IMR-90 (cell line): ENCODE measurements at regions of chr16 and their contacts with region 1.

Region 1: GRCh38 chr16:27639561-27640276 is 89.8 kb downstream of the KATNIP start:
- DNase-seq: peak; percentile 65
- ATAC-seq: peak; percentile 84
- H3K4me3 ChIP-seq: no peak overlapping the region
- H3K27ac ChIP-seq: no peak overlapping the region
- H3K4me1 ChIP-seq: peaks cover 4% of the 10 kb centered on the region; the same call in 1 of the 2 replicates
- H3K27me3 ChIP-seq: no peaks in the 10 kb centered on the region
- CTCF ChIP-seq: peak; percentile 76
- POLR2A ChIP-seq: no peak
- RAD21 ChIP-seq: peak; percentile 87

Region 2: GRCh38 chr16:27335349-27336053 is 304.2 kb before region 1 on chr16:
- CTCF ChIA-PET with region 1: no interaction called
- POLR2A ChIA-PET with region 1: no interaction called
- dilution Hi-C with region 1: no loop called
- in situ Hi-C with region 1: no loop called
- intact Hi-C with region 1: no loop called
- DNase-seq: peak; percentile 54
- ATAC-seq: peak; percentile 61
- H3K4me3 ChIP-seq: no peak overlapping the region
- H3K27ac ChIP-seq: peak overlapping the region; percentile 51
- H3K4me1 ChIP-seq: peaks cover 25% of the 10 kb centered on the region
- H3K27me3 ChIP-seq: no peaks in the 10 kb centered on the region
- CTCF ChIP-seq: no peak
- POLR2A ChIP-seq: no peak
- RAD21 ChIP-seq: no peak

Region 3: GRCh38 chr16:27676839-27677238 is 37.1 kb after region 1 on chr16:
- CTCF ChIA-PET with region 1: no interaction called
- POLR2A ChIA-PET with region 1: no interaction called
- dilution Hi-C with region 1: no loop called
- in situ Hi-C with region 1: no loop called
- intact Hi-C with region 1: loop called (anchors 2 kb)
- DNase-seq: peak; percentile 80
- ATAC-seq: peak; percentile 90
- H3K4me3 ChIP-seq: no peak overlapping the region
- H3K27ac ChIP-seq: no peak overlapping the region
- H3K4me1 ChIP-seq: peaks cover 13% of the 10 kb centered on the region
- H3K27me3 ChIP-seq: no peaks in the 10 kb centered on the region
- CTCF ChIP-seq: no peak
- POLR2A ChIP-seq: no peak
- RAD21 ChIP-seq: no peak

Region 4: DNA sequence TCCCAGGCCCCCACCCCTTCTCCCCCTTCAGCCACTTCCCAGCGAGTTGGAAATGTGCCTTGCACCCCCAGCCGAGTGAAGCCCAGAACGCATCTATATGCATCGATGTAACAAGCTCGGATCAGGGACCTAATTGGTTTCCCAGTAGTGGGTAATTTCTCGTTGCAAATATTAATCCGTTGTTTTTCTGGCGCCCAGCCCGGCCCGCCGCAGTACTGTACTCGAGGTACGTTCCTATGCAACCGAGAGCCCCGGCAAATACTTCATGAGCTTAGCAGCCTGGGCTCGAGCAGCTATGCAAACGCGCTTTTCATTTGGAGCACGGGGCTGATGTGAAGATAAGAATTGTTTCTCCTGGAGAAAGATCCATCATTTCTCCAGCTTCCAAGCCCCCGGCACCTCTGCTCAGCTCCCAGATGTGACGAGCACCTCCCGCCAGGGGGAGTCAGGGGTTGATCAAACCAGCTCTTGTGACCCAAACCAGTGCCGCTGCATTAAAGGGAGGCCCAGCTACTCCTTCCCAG is 140.0 kb after region 1 on chr16:
- CTCF ChIA-PET with region 1: interaction called, 4 read pairs
- POLR2A ChIA-PET with region 1: no interaction called
- dilution Hi-C with region 1: no loop called
- in situ Hi-C with region 1: no loop called
- intact Hi-C with region 1: loop called (anchors 10 kb)
- DNase-seq: peak; percentile 46
- ATAC-seq: peak; percentile 88
- H3K4me3 ChIP-seq: no peak overlapping the region
- H3K27ac ChIP-seq: no peak overlapping the region
- H3K4me1 ChIP-seq: no peaks in the 10 kb centered on the region
- H3K27me3 ChIP-seq: no peaks in the 10 kb centered on the region
- CTCF ChIP-seq: peak; percentile 53
- POLR2A ChIP-seq: no peak
- RAD21 ChIP-seq: peak; percentile 53

Region 5: GRCh38 chr16:27972500-27972899 is 332.8 kb after region 1 on chr16:
- CTCF ChIA-PET with region 1: no interaction called
- POLR2A ChIA-PET with region 1: no interaction called
- dilution Hi-C with region 1: no loop called
- in situ Hi-C with region 1: no loop called
- intact Hi-C with region 1: loop called (anchors 1 kb)
- DNase-seq: peak; percentile 30
- ATAC-seq: no peak
- H3K4me3 ChIP-seq: no peak overlapping the region
- H3K27ac ChIP-seq: no peak overlapping the region
- H3K4me1 ChIP-seq: no peaks in the 10 kb centered on the region
- H3K27me3 ChIP-seq: peaks cover 8% of the 10 kb centered on the region
- CTCF ChIP-seq: peak; percentile 46
- POLR2A ChIP-seq: no peak
- RAD21 ChIP-seq: peak; percentile 47